ENCODE measurements at regions of chr7 and their contacts with region 1.

Region 1: GRCh38 chr7:155644178-155644970 is at the start of gene RBM33:
- DNase-seq: peak; percentile 82
- H3K4me3 ChIP-seq: peak within 1 kb of the TSS; percentile 90 to 99 (median 94)
- H3K27ac ChIP-seq: peak within 1 kb of the TSS; percentile 91 to 98 (median 95)
- H3K4me1 ChIP-seq: peaks cover 0 to 34% (median 22%) of the 10 kb centered on the region in 4 donors
- H3K27me3 ChIP-seq: no peaks in the 10 kb centered on the region
- CTCF ChIP-seq: no peak
- EP300 ChIP-seq: no peak
- POLR2A ChIP-seq: no peak
- total RNA-seq, gene RBM33: 27.5 to 60.4 (median 36.1) TPM

Region 2: DNA sequence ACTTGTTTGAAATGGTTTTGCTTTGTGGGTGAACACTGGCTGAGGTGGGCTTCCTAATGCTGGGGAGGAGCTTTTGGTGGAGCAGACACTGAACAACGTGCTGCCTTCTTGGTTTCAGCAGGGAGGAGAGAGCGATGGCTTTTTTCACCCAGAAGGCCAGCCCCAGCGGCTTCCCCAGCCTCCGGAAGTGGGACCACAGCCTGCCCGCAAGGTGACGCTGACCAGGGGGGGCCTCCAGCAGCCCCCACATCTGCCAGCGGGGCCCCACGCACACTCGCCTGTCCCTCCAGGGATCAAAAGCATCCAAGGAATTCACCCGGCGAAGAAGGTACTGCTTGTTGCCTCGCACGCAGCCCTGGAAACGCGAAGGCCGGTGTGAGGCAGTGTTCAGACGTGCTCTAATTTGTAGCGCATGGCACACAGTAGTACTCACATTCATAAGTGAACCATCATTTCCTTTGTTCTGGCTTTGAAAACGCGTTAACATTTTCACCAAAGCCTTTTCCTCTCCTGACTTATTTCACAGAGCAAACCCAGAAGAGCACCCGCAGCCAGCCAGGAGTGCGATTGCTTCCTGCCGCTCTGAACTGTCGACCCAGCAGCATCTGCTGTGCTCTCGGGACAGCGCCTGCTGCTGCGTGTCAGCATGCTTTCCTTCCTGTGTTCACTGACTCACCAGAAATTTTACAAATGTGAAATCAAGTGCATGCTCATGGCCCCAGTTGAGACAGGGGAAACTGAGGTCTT is 119.5 kb after region 1 on chr7:
- intact Hi-C with region 1: loop called (anchors 10 kb)
- DNase-seq: no peak
- H3K4me3 ChIP-seq: no peak overlapping the region
- H3K27ac ChIP-seq: peak overlapping the region in 3 of 4 donors; percentile 49 to 60 (median 56)
- H3K4me1 ChIP-seq: peaks cover 0 to 32% (median 7%) of the 10 kb centered on the region in 4 donors
- H3K27me3 ChIP-seq: no peaks in the 10 kb centered on the region
- CTCF ChIP-seq: no peak
- EP300 ChIP-seq: no peak
- POLR2A ChIP-seq: no peak